Activated CD4-positive, alpha-beta T cell treated with anti-CD3 and anti-CD28 coated beads, Interleukin-2, amount 10 ng/mL, durations not matched to agents 24 days and 14 days (primary cell): ENCODE measurements at regions of chr6 and their contacts with region 1.

Region 1: GRCh38 chr6:155174576-155175211 is 89.1 kb upstream of the CLDN20 start:
- DNase-seq: peak; percentile 92
- H3K4me3 Mint-ChIP-seq: peak overlapping the region; percentile 17
- H3K27ac Mint-ChIP-seq: peak overlapping the region; percentile 88
- H3K4me1 Mint-ChIP-seq: peaks cover 42% of the 10 kb centered on the region
- H3K27me3 Mint-ChIP-seq: peaks cover 2% of the 10 kb centered on the region

Region 2: DNA sequence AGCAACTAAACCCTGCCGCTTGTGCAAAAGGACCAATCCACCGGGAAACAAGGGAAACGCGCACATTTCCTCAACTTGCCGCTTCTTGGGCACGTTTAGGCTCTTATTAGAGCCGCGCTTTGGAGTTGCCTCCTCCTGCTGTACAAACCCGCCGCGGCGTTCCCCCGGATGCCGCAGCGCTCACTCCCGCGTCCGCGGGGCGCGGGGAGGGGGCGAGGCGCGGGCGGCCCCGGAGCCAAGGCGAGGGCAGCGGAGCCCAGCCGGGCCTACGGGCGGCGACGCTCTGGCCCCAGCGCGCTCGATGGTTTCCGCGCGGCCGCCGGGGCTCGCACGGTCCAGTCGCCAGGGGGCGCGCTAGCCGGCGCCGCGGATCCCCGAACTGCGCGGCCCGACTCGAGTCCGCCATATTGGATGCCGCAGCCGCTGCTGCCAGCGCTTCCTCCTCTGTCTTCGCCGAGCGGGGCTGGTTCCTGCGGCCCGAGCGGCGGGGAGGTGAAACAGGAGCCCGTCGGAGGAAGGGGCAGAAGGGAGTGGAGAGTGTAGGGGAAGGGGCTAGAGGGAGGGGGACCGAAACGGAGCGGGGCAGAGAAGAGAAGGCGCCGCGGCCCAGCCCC is 441.6 kb before region 1 on chr6 and contains the start of gene SCAF8:
- intact Hi-C with region 1: loop called (anchors 2 kb)
- DNase-seq: peak; percentile 97
- H3K4me3 Mint-ChIP-seq: peak within 1 kb of the TSS; percentile 89
- H3K27ac Mint-ChIP-seq: peak within 1 kb of the TSS; percentile 99
- H3K4me1 Mint-ChIP-seq: peaks cover 34% of the 10 kb centered on the region
- H3K27me3 Mint-ChIP-seq: no peaks in the 10 kb centered on the region
- total RNA-seq, gene SCAF8: 36.6 and 37.5 TPM in 2 replicates

Region 3: GRCh38 chr6:154995284-154996015 is 179.2 kb before region 1 on chr6 and contains the start of gene TIAM2:
- intact Hi-C with region 1: loop called (anchors 1 kb)
- DNase-seq: peak; percentile 76
- H3K4me3 Mint-ChIP-seq: peak within 1 kb of the TSS; percentile 68
- H3K27ac Mint-ChIP-seq: peak within 1 kb of the TSS; percentile 64
- H3K4me1 Mint-ChIP-seq: peaks cover 15% of the 10 kb centered on the region
- H3K27me3 Mint-ChIP-seq: peaks cover 24% of the 10 kb centered on the region
- total RNA-seq, gene TIAM2: 86.9 and 91.9 TPM in 2 replicates

Region 4: DNA sequence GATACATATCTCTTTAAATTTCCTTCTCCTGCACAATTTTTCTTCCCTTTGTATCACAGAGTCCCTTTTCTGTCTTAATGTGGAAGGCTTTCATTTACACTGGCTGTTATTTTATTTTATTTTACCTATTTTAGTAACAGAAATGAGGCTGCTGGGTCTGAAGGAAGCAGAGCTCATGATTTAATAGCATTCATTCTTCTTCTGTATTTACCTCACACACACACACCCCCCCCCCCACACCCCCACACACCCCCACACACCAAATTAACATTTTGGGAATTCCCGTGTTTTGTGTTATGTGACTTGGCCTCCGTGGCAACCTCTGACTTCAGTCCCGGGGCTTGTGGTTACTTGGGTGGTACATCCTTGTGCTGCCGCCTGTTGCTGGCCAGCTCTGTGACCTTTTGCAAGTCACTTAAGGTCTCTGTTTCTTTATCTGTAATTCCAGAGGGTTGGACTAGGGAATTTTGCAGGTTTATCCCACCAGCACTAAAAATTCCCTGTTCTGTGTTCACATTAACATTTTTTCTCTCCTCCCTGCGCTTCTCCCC is 70.8 kb before region 1 on chr6:
- intact Hi-C with region 1: loop called (anchors 1 kb)
- DNase-seq: peak; percentile 61
- H3K4me3 Mint-ChIP-seq: peak overlapping the region; percentile 28
- H3K27ac Mint-ChIP-seq: peak overlapping the region; percentile 65
- H3K4me1 Mint-ChIP-seq: peaks cover 44% of the 10 kb centered on the region
- H3K27me3 Mint-ChIP-seq: peaks cover 2% of the 10 kb centered on the region

Region 5: DNA sequence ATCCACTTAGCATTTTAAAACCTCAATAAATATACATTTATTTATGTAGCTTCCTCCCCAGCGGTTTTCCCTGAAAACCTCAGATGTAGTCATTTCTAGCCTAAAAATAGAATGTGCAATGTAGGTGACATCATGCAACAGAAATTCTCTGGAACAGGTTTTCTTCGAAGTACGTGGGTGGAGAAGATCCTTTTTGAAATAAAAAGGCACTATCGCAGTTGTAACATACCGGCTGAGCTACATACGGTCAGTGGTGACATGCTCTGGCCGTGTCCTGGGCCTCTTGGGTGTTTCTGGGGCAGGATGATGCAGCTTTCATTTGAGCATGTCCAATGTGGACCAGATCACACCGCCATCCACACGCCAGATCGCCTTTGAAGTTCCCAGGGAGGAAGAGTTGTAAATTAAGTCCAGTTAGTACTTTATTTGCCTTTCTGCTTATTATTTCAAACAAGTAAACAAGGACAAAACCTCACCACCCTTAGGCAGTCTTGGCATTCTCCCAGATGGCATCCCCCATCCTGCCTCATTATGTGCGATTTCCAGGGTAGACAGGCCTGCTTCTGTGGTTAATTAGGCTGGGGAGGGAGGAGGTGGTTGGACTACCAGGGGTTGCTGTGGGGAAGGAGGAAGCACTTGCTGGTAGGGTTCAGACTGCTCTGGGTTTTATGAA is 20.4 kb before region 1 on chr6:
- intact Hi-C with region 1: loop called (anchors 1 kb)
- DNase-seq: peak; percentile 86
- H3K4me3 Mint-ChIP-seq: peak overlapping the region; percentile 53
- H3K27ac Mint-ChIP-seq: peak overlapping the region; percentile 88
- H3K4me1 Mint-ChIP-seq: peaks cover 73% of the 10 kb centered on the region
- H3K27me3 Mint-ChIP-seq: no peaks in the 10 kb centered on the region

Region 6: GRCh38 chr6:155248008-155249001 is 73.6 kb after region 1 on chr6:
- intact Hi-C with region 1: loop called (anchors 1 kb)
- DNase-seq: peak; percentile 63
- H3K4me3 Mint-ChIP-seq: no peak overlapping the region
- H3K27ac Mint-ChIP-seq: no peak overlapping the region
- H3K4me1 Mint-ChIP-seq: no peaks in the 10 kb centered on the region
- H3K27me3 Mint-ChIP-seq: no peaks in the 10 kb centered on the region

Region 7: DNA sequence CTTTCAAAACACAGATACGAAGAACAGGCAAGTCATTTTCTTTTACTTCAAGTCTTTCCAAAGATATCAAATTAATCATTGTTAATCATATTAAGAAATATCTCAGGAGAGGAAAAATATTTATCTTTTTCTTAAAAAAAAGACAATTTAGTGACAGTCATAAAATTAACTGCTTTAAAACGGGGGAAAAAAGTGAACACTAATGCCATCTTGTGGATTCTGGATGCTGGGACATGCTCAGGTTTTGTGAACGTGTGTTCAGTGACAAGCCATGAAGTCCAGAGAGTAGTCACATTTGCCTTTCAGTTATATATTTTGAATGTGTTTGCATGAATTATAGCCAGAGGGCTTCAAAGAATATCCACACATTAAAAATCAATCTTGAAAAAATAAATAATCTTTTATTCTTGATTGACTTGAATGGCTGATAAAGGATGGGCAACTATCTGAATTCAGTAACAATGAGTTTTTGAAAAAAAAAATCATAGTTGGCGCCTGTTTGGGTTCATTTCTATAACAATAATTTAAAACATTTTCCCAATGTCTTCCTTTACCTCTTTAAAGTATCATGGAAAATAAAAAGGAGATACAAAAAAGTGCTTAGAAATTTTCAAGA is 355.6 kb after region 1 on chr6:
- intact Hi-C with region 1: loop called (anchors 5 kb)
- DNase-seq: peak; percentile 71
- H3K4me3 Mint-ChIP-seq: no peak overlapping the region
- H3K27ac Mint-ChIP-seq: no peak overlapping the region
- H3K4me1 Mint-ChIP-seq: peaks cover 10% of the 10 kb centered on the region
- H3K27me3 Mint-ChIP-seq: peaks cover 2% of the 10 kb centered on the region